ENCODE measurements at regions of chr3 and their contacts with region 1.

Region 1: GRCh38 chr3:159776779-159777178 is 211.9 kb upstream of the IL12A start:
- DNase-seq: no peak
- H3K4me3 ChIP-seq: no peak overlapping the region
- H3K27ac ChIP-seq: no peak overlapping the region
- H3K4me1 ChIP-seq: peaks cover 12% of the 10 kb centered on the region
- H3K27me3 ChIP-seq: no peaks in the 10 kb centered on the region
- CTCF ChIP-seq: no peak

Region 2: GRCh38 chr3:159763602-159764489 is 12.9 kb before region 1 on chr3:
- CTCF ChIA-PET with region 1: no interaction called
- POLR2A ChIA-PET with region 1: interaction called, 11 read pairs
- intact Hi-C with region 1: no loop called
- DNase-seq: peak; percentile 92
- H3K4me3 ChIP-seq: peak overlapping the region; percentile 64
- H3K27ac ChIP-seq: no peak overlapping the region
- H3K4me1 ChIP-seq: peaks cover 11% of the 10 kb centered on the region
- H3K27me3 ChIP-seq: peaks cover 10% of the 10 kb centered on the region
- CTCF ChIP-seq: no peak

Region 3: GRCh38 chr3:160114355-160114995 is 337.7 kb after region 1 on chr3:
- CTCF ChIA-PET with region 1: no interaction called
- POLR2A ChIA-PET with region 1: no interaction called
- intact Hi-C with region 1: no loop called
- DNase-seq: no peak
- H3K4me3 ChIP-seq: no peak overlapping the region
- H3K27ac ChIP-seq: no peak overlapping the region
- H3K4me1 ChIP-seq: peaks cover 11% of the 10 kb centered on the region
- H3K27me3 ChIP-seq: no peaks in the 10 kb centered on the region
- CTCF ChIP-seq: no peak